Activated T-helper 2 cell treated with anti-CD3 and anti-CD28 coated beads, Interferon-gamma antibody, Interleukin-2, Interleukin-4, amounts not matched to agents 10 μg/mL and 5 μg/mL and 100 μg/mL, durations not matched to agents 14 hours and 24 hours and 36 hours (primary cell): ENCODE measurements at regions of chr1 and their contacts with region 1.

Region 1: GRCh38 chr1:96236156-96236739 is 485.3 kb upstream of the PTBP2 start:
- DNase-seq: no peak
- H3K4me3 Mint-ChIP-seq: no peak overlapping the region
- H3K27ac Mint-ChIP-seq: no peak overlapping the region
- H3K4me1 Mint-ChIP-seq: no peaks in the 10 kb centered on the region
- H3K27me3 Mint-ChIP-seq: no peaks in the 10 kb centered on the region

Region 2: GRCh38 chr1:96206451-96206850 is 29.8 kb before region 1 on chr1:
- intact Hi-C with region 1: no loop called
- DNase-seq: no peak
- H3K4me3 Mint-ChIP-seq: no peak overlapping the region
- H3K27ac Mint-ChIP-seq: no peak overlapping the region
- H3K4me1 Mint-ChIP-seq: no peaks in the 10 kb centered on the region
- H3K27me3 Mint-ChIP-seq: no peaks in the 10 kb centered on the region

Region 3: DNA sequence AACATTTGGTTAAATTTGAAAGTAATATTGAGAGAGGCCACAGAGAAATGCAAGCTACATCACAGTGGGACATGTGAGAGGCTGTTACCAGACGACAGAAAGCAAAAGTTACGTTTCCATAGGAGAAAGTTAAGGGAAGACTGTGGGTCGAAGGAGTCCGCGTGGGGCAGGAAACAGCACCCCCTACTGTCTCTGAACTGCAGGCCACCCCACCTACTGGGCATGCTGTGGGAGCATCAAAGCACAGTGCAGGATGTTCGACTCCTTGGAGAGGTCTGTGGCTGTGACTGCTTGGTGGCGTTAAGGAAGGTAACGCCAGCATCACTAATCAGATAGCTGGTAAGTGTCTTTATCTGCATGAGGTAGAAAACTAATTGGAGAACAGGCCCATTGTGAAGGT is 609.2 kb after region 1 on chr1:
- intact Hi-C with region 1: loop called (anchors 2 kb)
- DNase-seq: peak; percentile 22
- H3K4me3 Mint-ChIP-seq: no peak overlapping the region
- H3K27ac Mint-ChIP-seq: no peak overlapping the region
- H3K4me1 Mint-ChIP-seq: no peaks in the 10 kb centered on the region
- H3K27me3 Mint-ChIP-seq: no peaks in the 10 kb centered on the region